ENCODE measurements at regions of chr6 and their contacts with region 1.

Region 1: GRCh38 chr6:49409951-49410542 is 53.0 kb downstream of the MMUT start:
- DNase-seq: peak; percentile 57 to 69
- H3K4me3 ChIP-seq: no peak overlapping the region
- H3K4me3 Mint-ChIP-seq: no peak overlapping the region
- H3K27ac Mint-ChIP-seq: no peak overlapping the region
- H3K4me1 ChIP-seq: peaks cover 6% of the 10 kb centered on the region
- H3K4me1 Mint-ChIP-seq: peaks cover 8% of the 10 kb centered on the region
- H3K27me3 ChIP-seq: no peaks in the 10 kb centered on the region
- H3K27me3 Mint-ChIP-seq: no peaks in the 10 kb centered on the region
- CTCF ChIP-seq: peak; percentile 76 to 84

Region 2: GRCh38 chr6:47787620-47788497 is 1622.2 kb before region 1 on chr6:
- CTCF ChIA-PET with region 1: interaction called, 12 read pairs
- POLR2A ChIA-PET with region 1: no interaction called
- intact Hi-C with region 1: loop called (anchors 5 kb)
- DNase-seq: peak; percentile 56 to 67
- H3K4me3 ChIP-seq: no peak overlapping the region
- H3K4me3 Mint-ChIP-seq: no peak overlapping the region
- H3K27ac Mint-ChIP-seq: no peak overlapping the region
- H3K4me1 ChIP-seq: no peaks in the 10 kb centered on the region
- H3K4me1 Mint-ChIP-seq: no peaks in the 10 kb centered on the region
- H3K27me3 ChIP-seq: no peaks in the 10 kb centered on the region
- H3K27me3 Mint-ChIP-seq: peaks cover 11% of the 10 kb centered on the region
- CTCF ChIP-seq: peak; percentile 88 to 90

Region 3: DNA sequence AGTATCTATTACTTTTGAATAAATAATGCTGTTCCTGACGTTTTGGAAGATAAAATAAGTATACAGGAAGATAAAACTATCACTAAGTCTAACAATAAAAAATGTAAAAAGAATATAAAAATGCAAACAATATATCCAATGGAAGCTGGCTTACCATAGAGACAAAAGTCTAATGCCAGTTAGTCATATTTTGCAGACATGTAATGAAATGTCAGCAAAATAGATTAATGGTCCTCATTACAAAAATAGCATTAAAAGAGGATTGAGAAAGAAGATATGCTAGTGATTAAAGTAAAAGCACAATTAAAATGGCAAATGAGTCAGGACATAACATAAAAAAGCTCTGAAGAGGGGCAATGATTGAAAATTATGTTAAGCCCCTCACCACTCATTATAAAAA is 212.0 kb before region 1 on chr6:
- CTCF ChIA-PET with region 1: no interaction called
- POLR2A ChIA-PET with region 1: no interaction called
- intact Hi-C with region 1: loop called (anchors 5 kb)
- DNase-seq: no peak
- H3K4me3 ChIP-seq: no peak overlapping the region
- H3K4me3 Mint-ChIP-seq: no peak overlapping the region
- H3K27ac Mint-ChIP-seq: no peak overlapping the region
- H3K4me1 ChIP-seq: no peaks in the 10 kb centered on the region
- H3K4me1 Mint-ChIP-seq: no peaks in the 10 kb centered on the region
- H3K27me3 ChIP-seq: no peaks in the 10 kb centered on the region
- H3K27me3 Mint-ChIP-seq: peaks cover 2% of the 10 kb centered on the region
- CTCF ChIP-seq: no peak

Region 4: GRCh38 chr6:49336514-49337131 is 73.4 kb before region 1 on chr6:
- CTCF ChIA-PET with region 1: no interaction called
- POLR2A ChIA-PET with region 1: no interaction called
- intact Hi-C with region 1: loop called (anchors 5 kb)
- DNase-seq: peak; percentile 58 to 80
- H3K4me3 ChIP-seq: no peak overlapping the region
- H3K4me3 Mint-ChIP-seq: no peak overlapping the region
- H3K27ac Mint-ChIP-seq: peak overlapping the region; percentile 53
- H3K4me1 ChIP-seq: peaks cover 12% of the 10 kb centered on the region; the same call in 1 of the 2 replicates
- H3K4me1 Mint-ChIP-seq: peaks cover 11% of the 10 kb centered on the region
- H3K27me3 ChIP-seq: no peaks in the 10 kb centered on the region
- H3K27me3 Mint-ChIP-seq: no peaks in the 10 kb centered on the region
- CTCF ChIP-seq: no peak